HCT116 (cell line): ENCODE measurements at regions of chr1 and their contacts with region 1.

Region 1: GRCh38 chr1:17922833-17923232 is 167.7 kb downstream of the ACTL8 start:
- DNase-seq: peak; percentile 24
- ATAC-seq: peak; percentile 75
- H3K4me3 ChIP-seq: no peak overlapping the region
- H3K27ac ChIP-seq: no peak overlapping the region
- H3K4me1 ChIP-seq: no peaks in the 10 kb centered on the region
- H3K27me3 ChIP-seq: peaks cover 42% of the 10 kb centered on the region; the same call in 1 of the 2 replicates
- CTCF ChIP-seq: peak; percentile 80 to 83 (median 82)
- POLR2A ChIP-seq: no peak
- RAD21 ChIP-seq: peak; percentile 87

Region 2: GRCh38 chr1:17569200-17570161 is 353.4 kb before region 1 on chr1:
- CTCF ChIA-PET with region 1: no interaction called
- POLR2A ChIA-PET with region 1: no interaction called
- RAD21 ChIA-PET with region 1: no interaction called
- intact Hi-C with region 1: no loop called
- DNase-seq: peak; percentile 58
- ATAC-seq: peak; percentile 76
- H3K4me3 ChIP-seq: peak overlapping the region in 1 of 2 experiments; percentile 48
- H3K27ac ChIP-seq: peak overlapping the region; percentile 95
- H3K4me1 ChIP-seq: peaks cover 47 to 67% of the 10 kb centered on the region in 2 experiments
- H3K27me3 ChIP-seq: no peaks in the 10 kb centered on the region
- CTCF ChIP-seq: no peak
- POLR2A ChIP-seq: no peak
- RAD21 ChIP-seq: no peak

Region 3: GRCh38 chr1:17661546-17662157 is 261.2 kb before region 1 on chr1:
- CTCF ChIA-PET with region 1: interaction called, 5 read pairs
- POLR2A ChIA-PET with region 1: no interaction called
- RAD21 ChIA-PET with region 1: no interaction called
- intact Hi-C with region 1: loop called (anchors 1 kb)
- DNase-seq: peak; percentile 12
- ATAC-seq: peak; percentile 83
- H3K4me3 ChIP-seq: no peak overlapping the region
- H3K27ac ChIP-seq: no peak overlapping the region
- H3K4me1 ChIP-seq: 0 out of 4 replicates have a peak, but pooled peaks cover 0 to 4% of the 10 kb centered on the region in 2 experiments
- H3K27me3 ChIP-seq: no peaks in the 10 kb centered on the region
- CTCF ChIP-seq: peak; percentile 64 to 95 (median 84)
- POLR2A ChIP-seq: no peak
- RAD21 ChIP-seq: peak; percentile 84

Region 4: DNA sequence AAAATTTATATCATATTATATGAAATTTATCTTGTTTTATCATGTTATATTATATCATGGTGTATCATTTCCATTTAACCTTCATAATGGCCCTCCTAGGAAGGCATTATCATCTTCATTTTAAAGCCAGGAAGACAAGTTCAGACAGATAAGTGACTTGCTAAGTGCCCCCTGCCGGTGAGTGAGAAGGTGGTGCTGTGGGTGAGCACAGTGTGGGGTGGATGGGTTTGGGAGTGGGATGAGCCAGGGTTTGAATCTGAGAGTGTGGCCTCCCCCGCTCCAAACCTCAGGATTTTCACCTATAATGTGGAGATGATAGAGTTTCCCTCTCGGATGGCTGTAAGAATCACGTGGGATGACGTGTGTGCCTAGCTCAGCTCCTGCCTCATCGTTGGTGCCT is 76.1 kb after region 1 on chr1:
- CTCF ChIA-PET with region 1: no interaction called
- POLR2A ChIA-PET with region 1: no interaction called
- RAD21 ChIA-PET with region 1: no interaction called
- intact Hi-C with region 1: loop called (anchors 1 kb)
- DNase-seq: no peak
- ATAC-seq: peak; percentile 78
- H3K4me3 ChIP-seq: no peak overlapping the region
- H3K27ac ChIP-seq: no peak overlapping the region
- H3K4me1 ChIP-seq: no peaks in the 10 kb centered on the region
- H3K27me3 ChIP-seq: peaks cover 36% of the 10 kb centered on the region
- CTCF ChIP-seq: peak in 2 of 3 experiments; percentile 50 to 53; a peak in 4 of 6 replicates
- POLR2A ChIP-seq: no peak
- RAD21 ChIP-seq: peak; percentile 14; the same call in 1 of the 2 replicates

Region 5: DNA sequence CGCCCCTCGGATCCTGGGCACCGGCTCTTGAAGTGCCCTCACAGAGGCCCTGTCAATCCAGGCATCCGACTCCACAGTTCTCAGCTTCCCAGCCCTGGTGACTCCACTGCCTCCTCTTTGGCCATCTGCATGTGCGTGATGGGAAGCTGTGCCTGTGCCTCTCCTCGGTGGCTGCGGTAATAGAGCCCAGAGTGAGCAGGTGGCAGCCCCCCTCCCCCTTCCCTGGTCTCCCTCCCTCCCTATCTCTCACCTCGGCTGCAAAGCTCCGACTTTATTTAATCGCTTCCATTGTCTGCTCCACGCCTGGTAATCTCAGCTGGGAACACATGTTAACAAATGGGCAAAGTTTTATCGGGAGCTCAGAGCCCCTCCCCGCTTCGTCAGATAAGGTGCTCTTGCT is 276.6 kb after region 1 on chr1:
- CTCF ChIA-PET with region 1: interaction called, 3 read pairs
- POLR2A ChIA-PET with region 1: no interaction called
- RAD21 ChIA-PET with region 1: no interaction called
- intact Hi-C with region 1: loop called (anchors 5 kb)
- DNase-seq: no peak
- ATAC-seq: no peak
- H3K4me3 ChIP-seq: no peak overlapping the region
- H3K27ac ChIP-seq: no peak overlapping the region
- H3K4me1 ChIP-seq: no peaks in the 10 kb centered on the region
- H3K27me3 ChIP-seq: peaks cover 95% of the 10 kb centered on the region
- CTCF ChIP-seq: no peak
- POLR2A ChIP-seq: no peak
- RAD21 ChIP-seq: no peak

Region 6: DNA sequence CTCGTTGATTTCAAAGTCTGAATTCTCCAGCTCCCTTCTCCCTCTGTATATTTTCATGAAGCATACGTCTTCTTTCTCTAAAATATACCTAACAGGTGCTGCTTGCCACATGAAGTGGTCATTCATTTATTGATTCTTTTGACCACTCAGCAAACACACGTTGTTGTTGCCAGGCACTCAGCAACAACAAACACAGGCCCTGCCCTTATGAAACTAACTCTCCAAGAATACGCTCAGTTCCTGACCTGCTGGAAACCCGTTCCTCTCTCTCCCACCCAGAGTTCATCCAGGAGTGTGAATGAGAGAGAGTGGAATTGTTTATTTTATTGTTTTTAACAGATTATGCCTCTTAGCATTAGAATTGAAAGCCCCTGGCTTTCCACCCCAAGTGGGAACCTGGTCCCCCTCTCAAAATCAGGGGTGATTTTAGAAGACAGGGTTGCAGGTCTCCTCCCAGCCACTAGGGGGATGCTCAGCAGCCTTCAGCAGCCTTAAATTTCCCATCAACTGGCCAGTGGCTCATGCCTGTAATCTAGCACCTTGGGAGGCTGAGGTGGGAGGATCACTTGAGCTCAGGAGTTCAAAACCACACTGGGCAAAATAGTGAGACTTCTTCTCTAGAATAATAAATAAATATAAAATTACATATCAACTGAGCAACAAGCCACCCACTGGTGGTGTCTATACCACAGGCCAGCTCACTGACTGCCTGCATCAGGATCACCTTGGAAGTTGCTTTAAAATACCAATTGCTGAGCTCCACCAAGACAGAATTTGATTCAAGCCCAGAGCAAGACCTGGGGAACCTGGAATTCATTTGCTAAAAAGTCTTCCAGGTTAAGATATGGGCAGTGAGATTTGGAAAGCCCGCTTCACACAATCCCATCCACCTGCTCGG is 376.9 kb after region 1 on chr1:
- CTCF ChIA-PET with region 1: interaction called, 7 read pairs
- POLR2A ChIA-PET with region 1: no interaction called
- RAD21 ChIA-PET with region 1: interaction called in 1 of 2 experiments, 5 read pairs
- intact Hi-C with region 1: loop called (anchors 2 kb)
- DNase-seq: peak; percentile 10
- ATAC-seq: peak; percentile 77
- H3K4me3 ChIP-seq: no peak overlapping the region
- H3K27ac ChIP-seq: no peak overlapping the region
- H3K4me1 ChIP-seq: no peaks in the 10 kb centered on the region
- H3K27me3 ChIP-seq: peaks cover 49% of the 10 kb centered on the region
- CTCF ChIP-seq: peak; percentile 60 to 91 (median 83)
- POLR2A ChIP-seq: no peak
- RAD21 ChIP-seq: peak; percentile 49

Region 7: DNA sequence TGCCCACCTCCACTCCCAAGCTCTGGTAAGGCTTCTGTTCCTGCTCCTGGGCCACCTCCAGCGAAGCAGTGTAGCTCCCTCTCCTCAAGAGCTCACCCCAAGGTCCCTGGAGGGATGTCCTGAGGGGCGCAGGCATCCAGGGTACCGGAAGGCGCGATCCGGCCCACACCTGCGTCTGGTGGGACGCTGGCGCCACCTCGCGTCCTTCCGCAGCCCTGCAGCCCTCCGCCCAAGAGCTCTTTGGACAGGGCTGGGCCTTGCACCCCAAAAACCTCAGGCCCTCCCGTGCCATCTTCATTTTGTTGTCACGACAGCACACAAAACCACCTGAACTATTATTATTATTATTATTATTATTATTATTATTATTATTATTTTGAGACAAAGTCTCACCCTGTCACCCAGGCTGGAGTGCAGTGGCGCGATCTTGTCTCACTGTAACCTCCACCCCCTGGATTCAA is 658.6 kb after region 1 on chr1:
- CTCF ChIA-PET with region 1: interaction called, 12 read pairs
- POLR2A ChIA-PET with region 1: no interaction called
- RAD21 ChIA-PET with region 1: no interaction called
- intact Hi-C with region 1: loop called (anchors 2 kb)
- DNase-seq: no peak
- ATAC-seq: peak; percentile 94
- H3K4me3 ChIP-seq: no peak overlapping the region
- H3K27ac ChIP-seq: no peak overlapping the region
- H3K4me1 ChIP-seq: peaks cover 0 to 6% of the 10 kb centered on the region in 2 experiments; a peak in 3 of 4 replicates
- H3K27me3 ChIP-seq: no peaks in the 10 kb centered on the region
- CTCF ChIP-seq: peak; percentile 52 to 93 (median 82); a peak in 5 of 6 replicates
- POLR2A ChIP-seq: no peak
- RAD21 ChIP-seq: peak; percentile 85